ENCODE measurements at regions of chr15 and their contacts with region 1.

Region 1: DNA sequence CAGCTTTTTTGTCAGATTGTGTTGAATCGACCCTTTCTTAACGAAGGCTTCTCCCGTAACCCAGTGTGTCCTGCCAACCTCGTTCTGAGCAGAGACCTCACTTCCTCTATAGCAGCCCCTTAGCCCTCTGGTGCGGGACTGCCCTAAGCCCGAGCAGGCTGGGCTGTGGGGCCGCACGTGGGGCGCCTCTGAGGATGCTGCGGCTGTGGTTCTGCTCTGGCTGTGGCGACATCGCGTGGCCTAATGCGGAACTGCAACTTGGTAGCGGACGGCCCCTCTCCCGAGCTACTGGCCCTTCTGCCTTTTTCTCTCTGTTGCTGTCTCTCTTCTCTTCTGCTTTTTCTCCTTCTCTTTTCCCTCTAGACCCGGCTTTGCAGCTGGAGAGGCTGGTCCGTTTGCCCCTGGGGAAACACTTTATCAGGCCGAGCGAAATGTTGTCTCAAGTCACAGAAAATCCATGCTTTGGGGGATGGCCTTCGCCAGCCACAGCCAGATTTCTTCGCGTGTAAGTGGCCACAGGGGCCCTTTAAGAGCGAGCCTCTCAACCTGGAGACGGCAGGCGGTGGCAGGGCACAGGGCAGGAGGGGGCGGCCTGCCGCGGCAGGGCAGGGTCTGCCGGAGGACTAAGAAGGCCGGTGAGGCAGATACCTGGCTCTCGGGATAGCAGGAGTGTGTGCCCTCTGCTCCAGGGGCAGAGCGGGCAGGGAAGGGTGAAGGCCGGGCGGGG is 19.4 kb upstream of the KIF23 start:
- DNase-seq: no peak
- H3K4me3 ChIP-seq: no peak overlapping the region
- H3K27ac ChIP-seq: peak overlapping the region; percentile 11
- H3K27me3 ChIP-seq: no peaks in the 10 kb centered on the region
- CTCF ChIP-seq: peak; percentile 95

Region 2: GRCh38 chr15:69367231-69367630 is 27.5 kb before region 1 on chr15:
- CTCF ChIA-PET with region 1: interaction called, 12 read pairs
- POLR2A ChIA-PET with region 1: no interaction called
- DNase-seq: no peak
- H3K4me3 ChIP-seq: no peak overlapping the region
- H3K27ac ChIP-seq: no peak overlapping the region
- H3K27me3 ChIP-seq: no peaks in the 10 kb centered on the region
- CTCF ChIP-seq: no peak